A673 (cell line): ENCODE measurements at regions of chr21 and their contacts with region 1.

Region 1: DNA sequence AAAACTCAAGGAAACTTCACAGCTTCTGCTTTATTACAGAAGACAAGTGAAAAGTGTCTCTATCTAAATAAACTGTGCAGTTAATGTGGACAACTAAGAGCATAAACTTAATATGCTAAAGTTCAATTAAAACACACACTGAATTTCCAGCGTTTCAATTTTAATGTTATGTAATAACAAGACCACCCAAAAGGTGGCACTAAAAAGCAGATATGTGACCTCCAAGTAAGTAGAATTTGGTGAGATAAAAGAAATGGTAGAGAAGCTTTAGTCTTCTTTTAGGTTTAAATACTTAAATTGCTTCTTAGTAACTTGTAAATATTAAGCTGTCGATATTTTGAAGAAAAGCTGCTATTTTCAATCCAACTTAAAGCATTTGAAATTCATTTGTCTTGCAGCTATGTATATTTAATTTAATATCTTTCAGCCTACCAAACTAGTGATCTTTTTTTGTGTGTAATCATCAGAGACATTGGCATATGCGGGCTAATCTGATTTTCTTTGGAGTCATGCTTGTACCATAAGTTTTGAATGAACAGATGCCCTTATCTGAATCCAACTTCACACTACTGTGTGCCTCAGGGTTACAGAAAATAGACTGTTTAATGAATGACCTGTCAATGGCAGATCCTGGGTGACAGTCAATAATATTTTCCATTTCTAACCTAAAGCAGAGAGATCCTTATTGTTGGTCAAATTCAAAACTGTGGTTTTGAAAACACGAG is 36.5 kb upstream of the ADAMTS1 start:
- DNase-seq: peak; percentile 40
- H3K4me3 ChIP-seq: no peak overlapping the region
- H3K27ac ChIP-seq: no peak overlapping the region
- H3K4me1 ChIP-seq: no peaks in the 10 kb centered on the region
- H3K27me3 ChIP-seq: peaks cover 4% of the 10 kb centered on the region
- CTCF ChIP-seq: peak; percentile 60

Region 2: GRCh38 chr21:26826801-26827200 is 54.9 kb before region 1 on chr21:
- CTCF ChIA-PET with region 1: no interaction called
- POLR2A ChIA-PET with region 1: no interaction called
- intact Hi-C with region 1: no loop called
- DNase-seq: no peak
- H3K4me3 ChIP-seq: no peak overlapping the region
- H3K27ac ChIP-seq: no peak overlapping the region
- H3K4me1 ChIP-seq: peaks cover 4% of the 10 kb centered on the region
- H3K27me3 ChIP-seq: no peaks in the 10 kb centered on the region
- CTCF ChIP-seq: no peak

Region 3: DNA sequence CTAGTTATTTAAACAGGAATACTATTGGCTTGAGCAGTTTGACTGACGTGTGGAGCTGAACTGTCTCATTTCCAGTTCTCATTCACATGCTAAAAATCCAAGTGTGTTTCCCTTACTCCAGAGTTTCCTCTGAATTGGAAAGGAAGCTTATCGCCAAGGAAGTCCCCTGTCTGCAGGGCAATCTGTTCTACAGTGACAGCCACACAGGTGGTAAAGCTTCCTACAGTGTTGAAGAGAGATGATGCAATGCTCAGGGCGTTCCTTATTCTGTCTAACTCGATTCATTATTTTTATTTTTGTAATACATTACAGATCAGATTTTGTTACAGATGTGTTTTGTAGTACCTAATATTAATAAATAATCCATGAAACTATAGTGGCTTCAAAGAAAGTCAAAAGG is 44.0 kb after region 1 on chr21:
- CTCF ChIA-PET with region 1: no interaction called
- POLR2A ChIA-PET with region 1: no interaction called
- intact Hi-C with region 1: no loop called
- DNase-seq: no peak
- H3K4me3 ChIP-seq: no peak overlapping the region
- H3K27ac ChIP-seq: no peak overlapping the region
- H3K4me1 ChIP-seq: no peaks in the 10 kb centered on the region
- H3K27me3 ChIP-seq: peaks cover 28% of the 10 kb centered on the region
- CTCF ChIP-seq: no peak

Region 4: DNA sequence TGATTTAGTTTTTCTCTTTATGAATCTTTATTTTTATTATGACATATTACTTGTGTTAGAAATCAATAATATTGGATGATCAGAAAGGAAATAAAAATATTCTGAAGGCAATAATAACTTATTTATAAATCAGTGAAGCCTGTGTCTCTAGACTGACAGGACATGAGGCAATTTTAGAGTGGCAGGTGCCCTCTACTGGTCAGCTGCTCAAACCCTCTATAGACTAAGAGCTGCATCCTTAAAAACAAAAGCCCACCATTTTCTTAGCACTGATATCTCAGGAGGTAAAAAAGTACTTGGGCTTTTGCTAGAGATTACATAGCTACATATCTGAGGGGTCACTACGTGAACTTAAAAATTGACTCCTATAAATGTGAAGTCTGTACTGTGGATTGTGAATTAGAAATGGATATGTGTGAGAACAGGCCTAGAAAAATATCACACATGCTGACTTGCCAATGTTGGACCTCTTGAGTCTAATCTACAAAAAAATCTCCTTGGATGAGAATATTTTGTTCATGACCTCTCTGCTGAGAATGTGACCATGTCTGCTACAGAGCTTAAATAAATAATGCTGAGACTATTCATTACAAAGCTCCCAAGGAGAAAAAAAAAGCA is 683.1 kb after region 1 on chr21:
- CTCF ChIA-PET with region 1: no interaction called
- POLR2A ChIA-PET with region 1: no interaction called
- intact Hi-C with region 1: loop called (anchors 10 kb)
- DNase-seq: peak; percentile 24
- H3K4me3 ChIP-seq: no peak overlapping the region
- H3K27ac ChIP-seq: no peak overlapping the region
- H3K4me1 ChIP-seq: no peaks in the 10 kb centered on the region
- H3K27me3 ChIP-seq: no peaks in the 10 kb centered on the region
- CTCF ChIP-seq: peak; percentile 66